Activated T-helper 2 cell treated with anti-CD3 and anti-CD28 coated beads, Interferon-gamma antibody, Interleukin-2, Interleukin-4, amounts not matched to agents 10 μg/mL and 5 μg/mL and 100 μg/mL, durations not matched to agents 14 hours and 24 hours and 36 hours (primary cell): ENCODE measurements at regions of chr11 and their contacts with region 1.

Region 1: DNA sequence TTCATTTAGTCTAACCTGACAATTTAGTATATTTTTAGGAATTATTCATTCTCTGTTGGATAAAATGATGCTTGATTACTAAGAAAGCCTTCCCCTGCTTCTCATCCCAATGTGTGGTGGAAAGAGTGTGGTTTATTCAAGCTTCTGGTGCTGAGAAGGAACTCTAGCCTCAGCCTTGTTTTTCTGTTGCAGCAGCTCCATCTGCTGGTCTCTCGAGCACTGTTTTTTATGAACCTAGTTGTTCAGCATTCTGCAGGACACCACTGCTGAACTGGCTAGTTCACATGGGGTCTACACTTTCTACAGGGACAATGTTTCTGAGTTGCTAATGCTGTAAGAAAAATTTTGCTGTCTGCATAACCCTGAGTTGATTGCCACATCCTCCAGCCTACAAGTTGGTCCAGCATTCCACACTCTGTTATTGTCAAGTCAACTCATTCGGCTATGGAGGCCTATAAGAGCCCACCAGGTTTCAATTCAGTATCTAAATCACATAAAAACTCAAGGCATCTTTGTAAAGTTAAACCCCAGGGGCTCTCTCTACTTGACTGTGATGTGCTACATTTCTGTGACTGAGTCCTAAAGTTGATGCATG is 14.3 kb downstream of the OR2AG2 start:
- DNase-seq: peak; percentile 39
- H3K4me3 Mint-ChIP-seq: no peak overlapping the region
- H3K27ac Mint-ChIP-seq: no peak overlapping the region
- H3K4me1 Mint-ChIP-seq: peaks cover 3% of the 10 kb centered on the region
- H3K27me3 Mint-ChIP-seq: peaks cover 6% of the 10 kb centered on the region

Region 2: GRCh38 chr11:6152086-6152485 is 605.4 kb before region 1 on chr11:
- intact Hi-C with region 1: no loop called
- DNase-seq: no peak
- H3K4me3 Mint-ChIP-seq: no peak overlapping the region
- H3K27ac Mint-ChIP-seq: no peak overlapping the region
- H3K4me1 Mint-ChIP-seq: no peaks in the 10 kb centered on the region
- H3K27me3 Mint-ChIP-seq: no peaks in the 10 kb centered on the region

Region 3: DNA sequence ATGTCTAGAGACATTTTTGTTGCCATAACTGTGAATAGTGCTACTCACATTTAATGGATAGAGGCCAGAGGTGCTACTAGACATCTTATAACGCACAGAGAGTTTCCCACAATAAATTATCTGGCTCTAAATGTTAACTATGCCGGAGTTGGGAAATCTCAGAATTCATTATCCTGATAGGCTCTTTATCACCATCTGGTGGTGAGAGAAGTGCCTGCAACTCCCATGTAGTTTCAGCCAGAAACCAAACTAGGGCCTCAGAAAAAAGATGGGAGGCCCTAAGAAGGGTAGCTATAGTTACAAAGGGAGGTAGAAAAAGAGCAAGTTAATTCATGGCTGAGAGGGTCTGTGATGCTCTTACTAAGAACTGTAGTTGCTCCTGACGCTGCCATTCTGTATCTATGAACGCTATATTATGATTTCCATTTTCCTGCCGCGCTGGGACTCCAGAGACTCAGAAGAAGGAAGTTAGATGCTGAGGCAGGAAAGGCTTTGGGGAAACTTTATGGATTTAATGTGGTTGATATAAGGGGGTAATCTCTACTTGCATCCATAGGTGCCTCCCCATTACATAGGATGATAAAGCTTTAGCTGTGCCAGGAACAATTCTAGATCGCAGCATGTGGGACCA is 51.5 kb before region 1 on chr11:
- intact Hi-C with region 1: loop called (anchors 2 kb)
- DNase-seq: peak; percentile 16
- H3K4me3 Mint-ChIP-seq: no peak overlapping the region
- H3K27ac Mint-ChIP-seq: no peak overlapping the region
- H3K4me1 Mint-ChIP-seq: peaks cover 8% of the 10 kb centered on the region
- H3K27me3 Mint-ChIP-seq: no peaks in the 10 kb centered on the region

Region 4: DNA sequence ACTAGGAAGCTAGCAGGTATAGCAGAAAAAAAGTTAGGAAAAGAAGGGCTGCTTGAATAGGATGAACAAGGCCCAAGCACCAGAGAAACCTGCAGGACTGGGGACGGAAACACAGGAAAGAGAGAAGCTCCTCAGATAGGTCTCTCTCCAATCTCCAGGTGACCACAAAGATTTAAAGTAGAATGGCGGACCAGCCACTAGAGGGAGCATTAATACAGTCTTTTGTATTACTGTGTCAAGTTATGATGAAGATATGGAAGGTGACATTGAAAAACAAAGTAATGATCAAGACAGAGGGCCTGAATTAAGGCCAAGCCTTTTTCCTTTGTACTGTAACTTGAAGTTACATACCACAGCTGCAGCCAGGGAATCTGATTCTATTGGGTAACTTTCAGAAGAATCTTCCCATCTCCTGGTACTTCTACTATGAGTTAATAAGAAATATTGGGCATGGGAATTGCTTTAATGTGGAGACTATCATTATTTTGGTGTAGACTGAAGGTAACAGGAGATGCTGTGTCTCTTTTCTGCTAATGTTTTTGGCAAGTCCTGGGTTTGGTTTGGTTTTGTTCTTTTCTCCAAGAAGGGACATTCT is 19.5 kb before region 1 on chr11:
- intact Hi-C with region 1: loop called (anchors 1 kb)
- DNase-seq: peak; percentile 43
- H3K4me3 Mint-ChIP-seq: no peak overlapping the region
- H3K27ac Mint-ChIP-seq: peak overlapping the region; percentile 20
- H3K4me1 Mint-ChIP-seq: peaks cover 75% of the 10 kb centered on the region
- H3K27me3 Mint-ChIP-seq: no peaks in the 10 kb centered on the region

Region 5: DNA sequence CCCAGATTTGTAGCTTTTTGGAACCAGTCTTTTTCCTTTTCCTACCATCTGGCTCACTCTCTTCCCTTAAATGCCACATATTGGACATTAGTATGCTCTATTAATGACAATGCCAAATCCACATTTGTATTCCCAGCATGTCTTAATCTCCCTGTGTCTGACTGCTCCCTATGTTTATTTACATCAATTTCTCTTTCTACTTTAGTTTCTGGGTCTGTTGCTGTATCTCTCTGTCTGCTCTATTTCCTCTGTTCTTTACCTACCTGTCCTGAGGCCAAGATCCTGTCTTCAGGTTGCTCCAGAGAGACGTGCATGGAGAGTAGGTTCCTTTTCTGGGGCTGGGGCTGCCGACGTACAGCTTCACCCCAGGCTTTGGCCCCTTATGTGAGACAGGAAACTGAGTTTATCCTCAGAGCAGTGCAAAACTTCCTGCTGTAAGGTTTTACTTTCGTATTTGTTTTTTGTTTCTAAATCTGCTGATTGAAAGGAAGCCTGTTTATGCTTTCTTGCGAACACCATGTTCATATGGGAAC is 11.3 kb before region 1 on chr11:
- intact Hi-C with region 1: loop called (anchors 1 kb)
- DNase-seq: peak; percentile 49
- H3K4me3 Mint-ChIP-seq: no peak overlapping the region
- H3K27ac Mint-ChIP-seq: no peak overlapping the region
- H3K4me1 Mint-ChIP-seq: peaks cover 24% of the 10 kb centered on the region
- H3K27me3 Mint-ChIP-seq: no peaks in the 10 kb centered on the region

Region 6: DNA sequence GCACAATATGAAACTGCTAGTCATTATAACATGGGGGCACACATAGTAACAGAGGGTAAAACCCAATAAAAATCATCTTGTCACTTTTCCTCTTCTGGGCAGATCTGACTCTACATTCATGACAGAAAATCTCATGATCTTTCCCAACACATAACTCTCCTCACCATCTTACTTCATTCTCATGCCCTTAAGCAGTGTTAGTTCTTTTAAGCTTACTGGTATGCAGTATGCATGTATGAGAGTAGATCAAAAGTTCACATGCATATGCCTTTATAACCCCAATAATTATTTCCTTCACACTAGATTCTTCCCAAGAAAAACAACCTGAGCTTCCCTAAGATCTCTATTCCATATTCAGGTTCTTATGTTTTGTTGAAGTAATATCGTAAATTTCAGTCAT is 113.8 kb after region 1 on chr11:
- intact Hi-C with region 1: no loop called
- DNase-seq: no peak
- H3K4me3 Mint-ChIP-seq: no peak overlapping the region
- H3K27ac Mint-ChIP-seq: no peak overlapping the region
- H3K4me1 Mint-ChIP-seq: no peaks in the 10 kb centered on the region
- H3K27me3 Mint-ChIP-seq: peaks cover 6% of the 10 kb centered on the region